RWPE1 (cell line): ENCODE measurements at regions of chr17 and their contacts with region 1.

Region 1: DNA sequence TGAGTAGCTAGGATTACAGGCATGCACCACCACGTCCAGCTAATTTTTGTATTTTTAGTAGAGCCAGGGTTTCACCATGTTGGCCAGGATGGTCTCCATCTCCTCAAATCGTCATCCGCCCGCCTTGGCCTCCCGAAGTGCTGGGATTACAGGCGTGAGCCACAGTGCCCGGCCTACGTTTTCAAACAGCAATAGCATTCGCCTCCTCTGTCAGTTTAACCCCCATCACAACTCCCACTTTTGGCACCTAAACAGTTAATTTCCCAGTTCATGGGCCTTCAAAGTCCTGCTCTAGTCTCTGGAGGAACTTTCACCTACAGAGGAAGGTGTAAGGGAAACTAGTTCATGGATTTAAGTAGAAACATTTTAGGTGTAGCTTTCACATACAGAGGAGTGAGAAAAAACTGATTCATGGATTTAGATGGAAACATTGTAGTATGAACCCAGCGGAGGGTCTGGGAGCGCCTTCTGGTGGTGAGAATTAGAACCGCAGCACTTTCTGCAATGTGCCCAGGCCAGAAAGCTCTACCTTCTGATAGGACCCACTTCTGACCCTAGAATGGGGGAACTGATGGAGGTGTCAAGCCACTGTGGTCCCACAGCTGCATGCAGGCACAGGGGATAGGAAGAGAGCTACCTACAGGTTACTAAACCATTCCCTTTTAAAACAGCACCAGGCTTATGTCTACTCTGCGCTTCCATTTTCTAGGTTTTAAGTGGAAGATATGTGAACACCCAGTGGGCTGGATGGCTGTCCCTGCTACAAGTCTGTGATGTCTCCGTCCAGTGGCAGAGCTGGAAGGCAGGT is 12.0 kb upstream of the MEOX1 start:
- DNase-seq: peak; percentile 57
- H3K27ac ChIP-seq: no peak overlapping the region
- CTCF ChIP-seq: peak; percentile 96

Region 2: DNA sequence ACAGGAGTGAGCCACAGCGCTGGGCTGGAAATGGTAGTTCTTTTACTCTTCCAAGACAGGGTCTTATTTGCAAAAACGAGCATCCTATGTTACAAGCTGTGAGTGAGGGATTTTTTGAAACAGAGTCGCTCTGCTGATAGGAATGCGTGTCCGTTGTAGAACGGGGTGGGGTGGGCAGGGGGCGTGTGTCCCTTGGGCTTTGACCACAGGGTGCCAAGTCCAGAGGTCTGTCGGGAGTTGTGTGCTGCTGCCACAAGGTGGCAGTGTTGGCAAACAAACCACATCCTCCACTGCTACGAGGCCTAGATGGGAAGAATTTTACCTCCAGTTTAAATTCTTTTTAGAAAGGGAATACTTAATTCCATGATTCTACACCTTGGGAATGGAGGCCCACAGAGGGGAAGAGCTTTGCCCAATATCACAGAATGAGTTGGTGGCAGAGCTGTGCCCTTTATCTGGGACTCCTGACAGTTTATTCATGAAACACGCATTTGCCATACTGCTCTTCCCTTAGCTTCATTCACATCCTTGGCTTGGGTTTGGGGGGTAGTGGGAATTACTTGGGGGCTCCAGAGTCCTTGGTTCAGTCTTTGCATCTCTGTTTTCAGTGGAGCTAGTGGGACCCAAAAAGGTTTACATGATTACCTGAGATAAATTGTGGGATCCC is 97.0 kb before region 1 on chr17:
- CTCF ChIA-PET with region 1: interaction called, 141 read pairs
- POLR2A ChIA-PET with region 1: no interaction called
- DNase-seq: peak; percentile 66
- H3K27ac ChIP-seq: no peak overlapping the region
- CTCF ChIP-seq: peak; percentile 91